ENCODE measurements at regions of chr14 and their contacts with region 1.

Region 1: GRCh38 chr14:99415496-99416281 is 65.0 kb downstream of the SETD3 start:
- DNase-seq: peak; percentile 56
- ATAC-seq: peak; percentile 87
- H3K4me3 ChIP-seq: no peak overlapping the region
- H3K27ac ChIP-seq: no peak overlapping the region
- H3K4me1 ChIP-seq: no peaks in the 10 kb centered on the region
- H3K27me3 ChIP-seq: no peaks in the 10 kb centered on the region
- CTCF ChIP-seq: peak; percentile 68; the same call in 1 of the 2 replicates

Region 2: DNA sequence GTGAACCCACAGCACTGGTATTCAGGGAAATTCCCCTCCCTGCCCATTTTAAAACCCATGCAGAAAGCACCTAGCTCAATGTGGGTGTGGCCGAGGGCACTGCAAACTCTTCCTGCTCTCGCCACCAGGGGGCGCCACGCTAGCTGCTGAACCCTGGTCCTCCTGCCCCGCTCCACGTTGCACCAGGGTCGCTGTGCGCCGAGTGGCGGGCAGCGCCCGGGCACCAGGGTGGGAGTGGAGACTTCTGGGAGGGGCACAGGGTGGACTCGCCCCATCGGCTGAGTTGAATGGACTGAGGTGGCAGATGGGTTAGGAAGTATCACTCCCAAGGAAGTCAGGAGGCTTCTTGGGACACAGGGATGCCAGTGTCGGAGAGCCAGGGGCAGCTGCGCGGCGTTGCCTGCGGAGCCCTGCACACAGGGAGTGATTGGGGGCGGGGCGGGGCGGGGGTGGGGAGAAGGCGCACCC is 95.5 kb before region 1 on chr14:
- CTCF ChIA-PET with region 1: interaction called, 3 read pairs
- POLR2A ChIA-PET with region 1: interaction called, 4 read pairs
- in situ Hi-C with region 1: no loop called
- intact Hi-C with region 1: loop called (anchors 10 kb)
- DNase-seq: peak; percentile 12
- ATAC-seq: peak; percentile 85
- H3K4me3 ChIP-seq: peak overlapping the region in 1 of 2 experiments; percentile 29; a peak in 1 of 4 replicates
- H3K27ac ChIP-seq: no peak overlapping the region
- H3K4me1 ChIP-seq: no peaks in the 10 kb centered on the region
- H3K27me3 ChIP-seq: no peaks in the 10 kb centered on the region
- CTCF ChIP-seq: peak; percentile 94

Region 3: GRCh38 chr14:99393047-99393655 is 22.5 kb before region 1 on chr14:
- CTCF ChIA-PET with region 1: interaction called, 9 read pairs
- POLR2A ChIA-PET with region 1: no interaction called
- in situ Hi-C with region 1: no loop called
- intact Hi-C with region 1: loop called (anchors 1 kb)
- DNase-seq: peak; percentile 2
- ATAC-seq: peak; percentile 78
- H3K4me3 ChIP-seq: no peak overlapping the region
- H3K27ac ChIP-seq: no peak overlapping the region
- H3K4me1 ChIP-seq: no peaks in the 10 kb centered on the region
- H3K27me3 ChIP-seq: no peaks in the 10 kb centered on the region
- CTCF ChIP-seq: peak; percentile 89